Sciatic nerve (tissue), 2 donors: ENCODE measurements at regions of chr13 and their contacts with region 1.

Region 1: GRCh38 chr13:81318231-81319019 is 977.5 kb upstream of the SPRY2 start:
- DNase-seq: no peak
- ATAC-seq: no peak

Region 2: DNA sequence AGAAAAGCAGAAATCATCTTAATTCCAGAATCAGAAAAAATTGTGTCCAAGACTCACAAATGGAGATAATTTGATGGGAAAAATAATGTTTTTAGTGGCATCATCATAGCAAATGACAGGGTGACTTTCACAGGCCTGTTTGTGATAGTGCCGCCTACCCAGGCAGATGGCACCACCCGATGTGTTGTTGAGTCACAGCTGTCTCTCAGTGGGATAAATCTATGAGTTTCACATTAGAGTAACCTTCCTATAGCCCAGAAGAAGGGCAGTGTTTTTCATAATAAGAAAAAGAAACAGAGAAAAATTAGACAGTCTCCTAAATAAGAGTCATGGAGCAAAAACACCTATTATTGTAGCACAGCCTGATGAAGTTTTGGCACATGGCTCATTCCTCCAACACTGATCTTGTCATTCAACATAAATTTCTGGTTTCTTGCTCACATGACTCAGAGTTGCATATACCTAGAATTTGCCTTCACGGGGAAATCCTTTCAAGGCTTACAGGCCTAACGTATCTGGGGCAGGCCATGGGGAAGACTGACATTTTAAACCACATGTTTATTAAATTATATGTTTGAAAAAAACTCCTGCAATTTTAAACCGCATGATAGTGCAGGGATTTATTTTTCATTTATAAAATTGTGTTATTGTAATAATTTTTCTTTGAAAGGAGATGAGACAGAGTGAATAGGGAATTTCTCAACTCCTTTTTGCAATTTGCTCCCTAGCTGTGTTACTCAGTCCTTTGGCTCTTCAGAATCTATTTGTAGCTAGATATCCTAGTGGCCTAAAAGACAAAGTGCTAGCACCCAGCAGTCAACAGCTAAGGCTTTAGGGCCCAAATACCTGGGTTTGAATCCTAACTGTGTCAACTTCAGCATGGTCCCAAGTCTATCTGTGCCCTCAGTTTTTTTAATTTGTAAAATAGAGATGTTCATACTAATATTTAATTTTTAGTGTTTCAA is 1443.7 kb before region 1 on chr13:
- intact Hi-C with region 1: loop called (anchors 5 kb)
- DNase-seq: no peak
- ATAC-seq: no peak

Region 3: DNA sequence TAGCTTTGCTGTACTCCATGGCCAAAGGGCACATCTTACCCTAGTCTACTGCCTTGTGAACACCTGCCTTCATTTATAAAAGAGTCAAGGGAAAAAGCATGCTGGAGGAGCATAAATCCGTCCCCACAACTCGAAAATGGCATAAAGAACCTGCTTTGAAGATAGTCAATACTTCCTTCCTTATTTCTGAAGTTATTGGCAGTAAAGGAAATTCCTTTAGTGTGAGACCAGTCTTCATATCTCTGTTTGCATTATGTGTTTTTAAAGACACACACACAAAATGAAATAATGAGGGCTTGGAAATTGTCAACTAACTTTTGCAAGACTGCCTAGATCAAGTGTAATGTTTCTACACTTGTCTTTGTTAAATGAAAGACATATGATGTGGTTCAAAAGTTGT is 1385.9 kb before region 1 on chr13:
- intact Hi-C with region 1: no loop called
- DNase-seq: no peak
- ATAC-seq: no peak

Region 4: DNA sequence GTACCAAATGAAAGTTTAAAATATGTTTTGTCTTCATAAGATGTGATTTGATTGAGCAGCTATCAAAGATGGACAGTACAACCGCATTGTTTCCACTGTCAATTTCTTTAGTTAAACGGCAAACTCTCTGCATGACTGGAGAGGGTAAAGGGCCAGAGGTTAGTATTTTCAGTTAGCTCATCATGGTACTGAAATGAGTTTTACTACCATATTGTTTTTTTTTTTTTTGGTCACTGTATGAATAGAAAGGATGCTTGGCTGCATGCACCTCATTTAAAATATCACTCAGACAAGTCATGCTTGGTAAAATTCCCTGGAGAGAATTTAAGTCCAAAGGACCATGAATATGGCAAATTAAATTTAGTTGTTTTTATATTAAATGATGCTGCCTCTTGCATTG is 35.4 kb before region 1 on chr13:
- intact Hi-C with region 1: no loop called
- DNase-seq: no peak
- ATAC-seq: no peak

Region 5: DNA sequence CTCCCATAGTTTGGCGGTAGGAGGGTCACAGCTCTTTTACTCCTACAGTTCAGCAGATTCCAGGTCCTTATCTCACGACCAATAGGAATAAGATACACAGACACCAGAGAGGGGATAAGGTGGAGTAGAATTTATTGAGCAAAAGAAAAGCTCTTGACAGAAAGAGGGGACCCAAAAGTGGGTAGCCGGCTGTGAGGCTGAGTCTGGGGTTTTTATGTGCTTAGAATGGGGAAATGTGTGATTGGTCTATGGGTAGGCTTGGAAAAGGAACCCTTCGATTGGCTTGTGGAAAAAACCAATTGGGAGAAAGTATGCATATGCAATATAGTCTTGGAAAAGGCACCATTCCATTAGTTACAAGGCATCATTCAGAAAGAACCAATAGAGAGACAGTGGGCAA is 379.4 kb after region 1 on chr13:
- intact Hi-C with region 1: no loop called
- DNase-seq: no peak
- ATAC-seq: no peak